ENCODE measurements at regions of chr18 and their contacts with region 1.

Region 1: GRCh38 chr18:7598167-7599047 is 31.3 kb downstream of the PTPRM start:
- DNase-seq: no peak
- ATAC-seq: peak in 1 of 2 donors; percentile 43
- H3K4me3 ChIP-seq: no peak overlapping the region
- H3K27ac ChIP-seq: peak overlapping the region in 1 of 4 donors; percentile 5
- H3K4me1 ChIP-seq: peaks cover 58 to 69% of the 10 kb centered on the region in 2 donors
- H3K27me3 ChIP-seq: no peaks in the 10 kb centered on the region
- CTCF ChIP-seq: no peak
- POLR2A ChIP-seq: no peak

Region 2: GRCh38 chr18:7545734-7546133 is 52.7 kb before region 1 on chr18:
- in situ Hi-C with region 1: no loop called
- intact Hi-C with region 1: loop called (anchors 5 kb)
- DNase-seq: no peak
- ATAC-seq: no peak
- H3K4me3 ChIP-seq: no peak overlapping the region
- H3K27ac ChIP-seq: no peak overlapping the region
- H3K4me1 ChIP-seq: no peaks in the 10 kb centered on the region
- H3K27me3 ChIP-seq: no peaks in the 10 kb centered on the region
- CTCF ChIP-seq: no peak
- POLR2A ChIP-seq: no peak